ENCODE measurements at regions of chr4 and their contacts with region 1.

Region 1: DNA sequence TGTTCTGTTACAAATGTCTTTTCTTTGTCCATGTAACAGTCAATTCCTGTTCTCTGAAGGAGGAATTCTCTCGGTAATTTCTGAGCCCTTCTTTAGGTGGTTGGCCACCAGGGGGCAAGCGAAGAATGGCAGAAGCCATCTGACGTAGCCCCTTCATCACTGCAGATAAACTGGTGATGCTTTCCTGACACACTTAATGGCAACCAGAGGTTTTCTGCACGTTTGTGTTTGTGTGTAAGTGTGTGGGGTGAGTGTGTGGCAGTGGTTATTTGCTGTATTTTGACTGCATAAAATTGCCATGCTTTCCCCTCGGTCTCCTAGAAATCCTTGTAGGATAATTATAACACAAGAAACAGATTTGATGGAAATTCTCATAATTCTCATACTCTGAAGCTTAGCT is 64.8 kb upstream of the STOX2 start:
- DNase-seq: peak; percentile 78
- ATAC-seq: peak; percentile 86
- H3K4me3 ChIP-seq: no peak overlapping the region
- H3K27ac ChIP-seq: no peak overlapping the region
- H3K4me1 ChIP-seq: no peaks in the 10 kb centered on the region; the same call in 1 of the 2 replicates
- H3K27me3 ChIP-seq: peaks cover 2% of the 10 kb centered on the region; the same call in 1 of the 2 replicates
- CTCF ChIP-seq: peak; percentile 96
- POLR2A ChIP-seq: 0 out of 2 replicates have a peak, but pooled peaks have one; percentile 38
- RAD21 ChIP-seq: peak; percentile 98

Region 2: GRCh38 chr4:183905081-183905592 is 64.8 kb after region 1 on chr4 and contains the start of gene STOX2:
- CTCF ChIA-PET with region 1: no interaction called
- POLR2A ChIA-PET with region 1: no interaction called
- dilution Hi-C with region 1: no loop called
- in situ Hi-C with region 1: no loop called
- intact Hi-C with region 1: loop called (anchors 2 kb)
- DNase-seq: peak; percentile 55
- ATAC-seq: peak; percentile 79
- H3K4me3 ChIP-seq: peak within 1 kb of the TSS; percentile 60
- H3K27ac ChIP-seq: peak within 1 kb of the TSS; percentile 41
- H3K4me1 ChIP-seq: no peaks in the 10 kb centered on the region
- H3K27me3 ChIP-seq: peaks cover 16% of the 10 kb centered on the region
- CTCF ChIP-seq: no peak
- POLR2A ChIP-seq: no peak
- RAD21 ChIP-seq: no peak
- total RNA-seq, gene STOX2: 4.4 and 5.4 TPM in 2 replicates

Region 3: DNA sequence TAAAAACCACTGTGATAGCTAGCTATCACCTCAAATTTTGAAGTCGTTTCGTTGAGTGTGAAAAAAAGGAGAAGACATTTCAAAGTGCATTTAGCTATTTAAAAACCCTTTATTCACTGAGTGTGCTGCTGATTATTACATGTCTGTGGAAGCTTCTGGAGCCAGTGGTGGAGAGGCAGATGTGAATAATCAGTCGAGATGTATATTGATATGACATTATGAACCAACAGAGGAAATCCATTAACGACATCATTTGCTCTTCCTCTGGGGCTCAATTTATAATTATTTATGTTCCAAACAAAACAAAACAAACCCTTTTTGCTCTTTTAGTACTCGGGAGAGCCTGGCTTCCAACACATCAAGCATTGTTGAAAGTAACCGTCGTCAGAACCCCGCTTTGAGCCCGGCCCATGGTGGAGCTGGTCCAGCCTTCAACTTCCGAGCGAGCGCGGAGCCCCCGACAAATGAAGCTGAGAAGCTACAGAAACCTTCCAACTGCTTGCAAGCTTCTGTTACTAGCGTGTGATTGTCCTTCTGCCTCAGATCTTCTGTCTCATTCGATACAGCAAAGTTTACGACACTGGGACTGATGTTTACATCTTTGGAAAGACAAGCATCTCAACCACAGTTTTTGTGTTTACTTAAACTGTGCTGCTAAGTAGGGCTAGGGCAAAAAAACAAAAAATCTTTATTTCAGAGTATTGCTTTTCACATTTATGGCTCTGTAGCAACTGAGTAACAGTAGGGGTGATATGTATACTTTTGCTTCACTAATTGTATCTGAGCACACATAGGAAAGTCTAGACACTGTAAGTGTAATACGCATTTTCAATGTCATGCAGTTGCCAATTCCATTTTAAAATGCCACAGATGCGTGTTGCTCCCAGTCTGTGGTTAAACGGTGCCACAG is 176.7 kb after region 1 on chr4:
- CTCF ChIA-PET with region 1: no interaction called
- POLR2A ChIA-PET with region 1: no interaction called
- dilution Hi-C with region 1: no loop called
- in situ Hi-C with region 1: no loop called
- intact Hi-C with region 1: loop called (anchors 5 kb)
- DNase-seq: peak; percentile 84
- ATAC-seq: peak; percentile 84
- H3K4me3 ChIP-seq: no peak overlapping the region
- H3K27ac ChIP-seq: peak overlapping the region; percentile 100
- H3K4me1 ChIP-seq: peaks cover 12% of the 10 kb centered on the region
- H3K27me3 ChIP-seq: no peaks in the 10 kb centered on the region
- CTCF ChIP-seq: no peak
- POLR2A ChIP-seq: no peak
- RAD21 ChIP-seq: no peak

Region 4: GRCh38 chr4:184100297-184100885 is 260.1 kb after region 1 on chr4:
- CTCF ChIA-PET with region 1: interaction called, 10 read pairs
- POLR2A ChIA-PET with region 1: no interaction called
- dilution Hi-C with region 1: no loop called
- in situ Hi-C with region 1: loop called (anchors 5 kb)
- intact Hi-C with region 1: loop called (anchors 1 kb)
- DNase-seq: peak; percentile 26
- ATAC-seq: peak; percentile 75
- H3K4me3 ChIP-seq: no peak overlapping the region
- H3K27ac ChIP-seq: peak overlapping the region; percentile 80; the same call in 1 of the 2 replicates
- H3K4me1 ChIP-seq: peaks cover 14% of the 10 kb centered on the region; the same call in 1 of the 2 replicates
- H3K27me3 ChIP-seq: no peaks in the 10 kb centered on the region; the same call in 1 of the 2 replicates
- CTCF ChIP-seq: peak; percentile 83
- POLR2A ChIP-seq: no peak
- RAD21 ChIP-seq: peak; percentile 88

Region 5: DNA sequence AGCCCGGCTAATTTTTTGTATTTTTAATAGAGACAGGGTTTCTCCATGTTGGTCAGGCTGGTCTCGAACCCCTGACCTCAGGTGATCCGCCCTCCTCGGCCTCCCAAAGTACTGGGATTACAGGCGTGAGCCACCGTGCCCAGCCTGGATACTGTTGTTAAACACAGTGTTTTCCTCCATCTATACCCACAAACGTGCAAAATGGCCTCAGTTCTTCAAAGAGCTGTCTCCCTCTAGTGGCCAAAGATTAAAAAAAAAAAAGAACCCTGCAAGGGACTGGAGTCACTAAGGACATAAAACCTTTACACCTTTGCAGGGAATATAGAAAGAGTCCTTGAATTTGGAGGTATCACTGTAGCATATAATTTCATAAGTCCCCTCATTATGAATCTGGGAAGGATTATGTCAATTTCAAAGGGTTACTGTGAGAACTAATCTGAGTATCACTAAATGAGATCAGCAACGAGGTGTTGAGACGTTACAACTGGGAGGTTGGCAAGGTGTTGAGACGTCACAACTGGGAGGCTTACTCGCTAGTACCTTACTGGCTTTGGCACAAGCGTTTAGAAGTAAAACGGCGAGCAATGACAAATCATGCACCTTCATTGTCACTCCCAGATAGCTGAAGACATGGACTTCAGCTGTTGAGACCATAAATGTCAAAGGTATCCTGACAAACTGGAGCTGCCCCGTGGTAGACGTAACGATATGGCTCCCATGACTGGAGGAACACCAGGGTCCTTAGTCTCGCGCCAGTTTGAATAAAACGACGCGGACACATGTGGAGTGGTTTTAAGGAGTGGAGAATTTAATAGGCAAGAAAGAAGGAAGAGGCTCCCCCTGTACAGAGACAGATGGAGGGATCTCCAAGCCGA is 410.7 kb after region 1 on chr4:
- CTCF ChIA-PET with region 1: no interaction called
- POLR2A ChIA-PET with region 1: no interaction called
- dilution Hi-C with region 1: no loop called
- in situ Hi-C with region 1: no loop called
- intact Hi-C with region 1: loop called (anchors 1 kb)
- DNase-seq: peak; percentile 60
- ATAC-seq: peak; percentile 79
- H3K4me3 ChIP-seq: no peak overlapping the region
- H3K27ac ChIP-seq: no peak overlapping the region
- H3K4me1 ChIP-seq: no peaks in the 10 kb centered on the region
- H3K27me3 ChIP-seq: no peaks in the 10 kb centered on the region
- CTCF ChIP-seq: peak; percentile 62
- POLR2A ChIP-seq: no peak
- RAD21 ChIP-seq: peak; percentile 49

Measured in IMR-90 (cell line).